PC-3 (cell line): ENCODE measurements at regions of chr18 and their contacts with region 1.

Region 1: GRCh38 chr18:9506046-9506792 is 30.9 kb downstream of the RALBP1 start:
- DNase-seq: peak; percentile 79
- ATAC-seq: peak; percentile 91
- H3K4me3 ChIP-seq: peak overlapping the region; percentile 8; the same call in 1 of the 2 replicates
- H3K27ac ChIP-seq: peak overlapping the region; percentile 37
- H3K4me1 ChIP-seq: peaks cover 20% of the 10 kb centered on the region
- H3K27me3 ChIP-seq: no peaks in the 10 kb centered on the region
- CTCF ChIP-seq: no peak

Region 2: DNA sequence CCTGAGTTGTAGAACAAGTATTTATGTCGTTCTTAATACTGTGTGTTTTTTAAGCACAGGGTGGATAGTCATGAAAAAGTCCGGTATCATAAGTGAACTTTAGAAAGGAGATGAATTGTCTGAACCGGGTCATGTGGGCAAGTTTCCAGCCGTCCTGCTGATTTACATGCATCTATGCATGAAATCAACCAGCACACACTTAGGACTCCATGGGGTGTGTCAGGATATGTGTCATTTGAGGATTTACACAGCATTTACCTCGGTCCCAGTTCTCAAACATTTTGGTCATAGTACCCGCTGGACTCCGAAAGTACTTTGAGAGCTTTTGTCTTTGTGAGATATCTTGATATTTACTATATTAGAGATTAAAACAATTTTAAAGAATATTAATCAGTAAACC is 219.2 kb before region 1 on chr18:
- CTCF ChIA-PET with region 1: interaction called, 4 read pairs
- POLR2A ChIA-PET with region 1: no interaction called
- intact Hi-C with region 1: loop called (anchors 5 kb)
- DNase-seq: peak; percentile 86
- ATAC-seq: peak; percentile 93
- H3K4me3 ChIP-seq: no peak overlapping the region
- H3K27ac ChIP-seq: no peak overlapping the region
- H3K4me1 ChIP-seq: peaks cover 6% of the 10 kb centered on the region
- H3K27me3 ChIP-seq: no peaks in the 10 kb centered on the region
- CTCF ChIP-seq: no peak

Region 3: DNA sequence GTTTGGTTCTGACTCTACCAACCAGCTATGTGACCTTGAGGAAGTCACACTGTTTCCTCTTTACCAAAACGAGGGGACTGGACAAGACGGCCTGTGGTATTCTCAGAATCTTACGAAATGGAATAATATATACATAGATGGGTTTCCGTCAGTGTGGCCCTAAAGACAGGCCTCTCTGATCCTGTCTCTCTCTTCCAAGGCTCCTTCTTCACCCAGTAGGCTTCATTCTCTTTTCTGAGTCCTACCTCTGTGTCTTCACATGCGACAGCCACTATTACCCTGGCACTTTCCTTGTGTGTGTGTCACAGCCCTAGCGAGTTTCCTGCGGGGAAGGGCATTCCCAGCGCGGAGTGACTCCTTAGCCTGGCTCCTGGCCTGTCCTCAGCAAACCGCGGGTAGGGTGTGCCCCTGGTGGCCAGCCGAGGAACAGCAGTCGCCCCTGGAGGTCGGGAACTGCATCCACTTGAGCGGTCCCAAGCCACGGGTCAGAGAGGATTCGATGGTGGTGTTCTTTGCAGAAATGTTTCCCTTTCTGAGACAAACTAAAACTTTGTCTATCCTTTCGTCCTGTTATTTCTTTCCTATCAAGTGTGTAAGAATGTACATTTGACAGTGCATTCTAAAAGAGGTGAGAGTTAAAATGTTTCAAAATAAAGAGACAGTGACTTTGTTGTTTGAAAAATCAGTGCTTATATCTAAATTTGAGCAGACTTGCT is 265.2 kb after region 1 on chr18:
- CTCF ChIA-PET with region 1: no interaction called
- POLR2A ChIA-PET with region 1: no interaction called
- intact Hi-C with region 1: no loop called
- DNase-seq: peak; percentile 76
- ATAC-seq: peak; percentile 96
- H3K4me3 ChIP-seq: no peak overlapping the region
- H3K27ac ChIP-seq: no peak overlapping the region
- H3K4me1 ChIP-seq: 0 out of 2 replicates have a peak, but pooled peaks cover 4% of the 10 kb centered on the region
- H3K27me3 ChIP-seq: no peaks in the 10 kb centered on the region
- CTCF ChIP-seq: peak; percentile 98